Natural killer cell (primary cell): ENCODE measurements at regions of chr18 and their contacts with region 1.

Region 1: GRCh38 chr18:77067291-77068061 is 65.1 kb downstream of the MBP start:
- DNase-seq: peak; percentile 74 to 84
- ATAC-seq: peak; percentile 45 to 73 (median 64)
- H3K4me3 ChIP-seq: no peak overlapping the region
- H3K4me3 Mint-ChIP-seq: peak overlapping the region; percentile 83
- H3K27ac ChIP-seq: peak overlapping the region; percentile 93
- H3K27ac Mint-ChIP-seq: peak overlapping the region; percentile 94 to 98
- H3K4me1 ChIP-seq: peaks cover 96% of the 10 kb centered on the region
- H3K4me1 Mint-ChIP-seq: peaks cover 100% of the 10 kb centered on the region in 2 donors
- H3K27me3 ChIP-seq: no peaks in the 10 kb centered on the region
- H3K27me3 Mint-ChIP-seq: no peaks in the 10 kb centered on the region
- CTCF ChIP-seq: no peak

Region 2: DNA sequence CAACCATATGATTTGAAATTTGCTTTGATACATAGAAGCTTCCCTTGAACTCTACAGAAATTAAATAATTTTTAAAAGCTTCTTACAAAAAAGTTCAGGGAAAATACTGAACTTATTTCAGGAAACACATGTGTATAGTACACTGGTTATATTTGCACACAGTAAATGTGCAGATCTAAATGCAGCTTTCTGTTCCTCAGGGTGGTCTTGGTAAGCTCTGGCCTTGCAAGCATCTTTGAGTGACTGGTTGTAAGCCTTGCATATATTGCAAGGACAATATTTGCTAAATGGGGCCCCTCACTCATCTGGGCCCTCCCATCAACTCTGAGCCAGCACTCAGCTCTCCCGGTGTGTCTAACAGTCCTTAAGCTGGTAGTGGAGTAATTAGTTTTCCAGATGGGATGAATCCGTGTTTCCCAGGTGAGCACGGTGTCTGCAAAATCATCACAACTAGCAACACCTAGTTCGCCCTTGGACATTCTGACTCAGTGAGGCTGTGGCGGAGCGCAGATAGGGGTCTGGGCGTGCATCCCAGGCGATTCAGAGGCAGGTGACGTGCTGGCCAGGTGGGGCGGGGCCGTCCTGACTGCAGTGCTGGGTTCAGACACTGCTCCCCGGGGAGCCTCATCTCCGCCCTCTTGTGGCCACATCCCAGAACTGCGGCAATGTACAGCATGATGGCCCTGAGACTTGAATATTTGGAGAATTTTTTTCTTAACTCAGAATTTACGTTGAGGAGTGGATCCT is 84.5 kb before region 1 on chr18:
- intact Hi-C with region 1: no loop called
- DNase-seq: peak; percentile 77 to 88
- ATAC-seq: peak; percentile 88 to 100 (median 98)
- H3K4me3 ChIP-seq: no peak overlapping the region
- H3K4me3 Mint-ChIP-seq: no peak overlapping the region
- H3K27ac ChIP-seq: no peak overlapping the region
- H3K27ac Mint-ChIP-seq: no peak overlapping the region
- H3K4me1 ChIP-seq: peaks cover 5% of the 10 kb centered on the region
- H3K4me1 Mint-ChIP-seq: peaks cover 5 to 8% of the 10 kb centered on the region in 2 donors
- H3K27me3 ChIP-seq: no peaks in the 10 kb centered on the region
- H3K27me3 Mint-ChIP-seq: no peaks in the 10 kb centered on the region
- CTCF ChIP-seq: peak; percentile 94

Region 3: DNA sequence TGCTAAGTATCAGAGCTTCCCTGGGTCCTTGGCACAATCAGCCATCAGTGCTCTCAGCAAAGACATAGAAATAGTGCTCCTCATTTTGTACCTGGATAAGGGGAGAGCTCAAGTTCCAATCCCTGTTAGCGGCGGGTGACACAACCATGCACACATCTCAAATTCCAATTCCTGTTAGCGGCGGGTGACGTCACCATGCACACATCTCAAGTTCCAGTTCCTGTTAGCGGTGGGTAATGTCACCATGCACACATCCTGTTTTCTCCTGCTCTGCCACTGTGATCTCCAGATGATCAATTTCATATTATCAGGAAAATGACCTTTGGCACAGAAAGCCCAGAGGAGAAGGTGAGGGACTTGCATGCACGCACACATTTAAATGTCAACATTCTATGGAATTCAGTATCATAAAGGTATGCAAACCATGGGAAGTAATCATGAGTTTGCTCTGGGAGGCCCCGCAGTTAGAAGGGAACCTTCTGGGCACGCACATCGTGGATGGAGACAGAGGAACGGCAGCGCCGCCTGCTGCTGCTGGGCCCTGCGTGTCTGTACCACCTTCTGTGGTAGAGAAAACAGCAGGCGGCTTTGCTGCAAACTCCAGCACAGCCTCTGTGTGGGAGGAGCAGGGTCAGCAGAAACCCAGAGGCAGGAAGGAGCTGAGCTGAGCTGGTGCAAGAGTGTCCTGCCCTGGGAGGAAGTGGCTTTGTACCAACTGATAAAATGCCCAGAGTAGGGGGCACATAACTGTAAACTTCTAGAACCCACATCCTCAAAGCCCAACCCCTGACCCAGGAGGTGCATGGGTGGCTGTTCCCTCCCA is 12.7 kb before region 1 on chr18:
- intact Hi-C with region 1: loop called (anchors 1 kb)
- DNase-seq: peak; percentile 66 to 93
- ATAC-seq: peak; percentile 70 to 90 (median 84)
- H3K4me3 ChIP-seq: peak overlapping the region; percentile 3
- H3K4me3 Mint-ChIP-seq: peak overlapping the region; percentile 79
- H3K27ac ChIP-seq: peak overlapping the region; percentile 92
- H3K27ac Mint-ChIP-seq: peak overlapping the region; percentile 87 to 98
- H3K4me1 ChIP-seq: peaks cover 81% of the 10 kb centered on the region
- H3K4me1 Mint-ChIP-seq: peaks cover 73 to 77% of the 10 kb centered on the region in 2 donors
- H3K27me3 ChIP-seq: no peaks in the 10 kb centered on the region
- H3K27me3 Mint-ChIP-seq: no peaks in the 10 kb centered on the region
- CTCF ChIP-seq: peak; percentile 60

Region 4: GRCh38 chr18:77079954-77080682 is 12.6 kb after region 1 on chr18:
- intact Hi-C with region 1: loop called (anchors 1 kb)
- DNase-seq: peak; percentile 51 to 77
- ATAC-seq: peak; percentile 70 to 88 (median 88)
- H3K4me3 ChIP-seq: no peak overlapping the region
- H3K4me3 Mint-ChIP-seq: peak overlapping the region; percentile 57
- H3K27ac ChIP-seq: peak overlapping the region; percentile 69
- H3K27ac Mint-ChIP-seq: peak overlapping the region; percentile 94 to 98
- H3K4me1 ChIP-seq: peaks cover 79% of the 10 kb centered on the region
- H3K4me1 Mint-ChIP-seq: peaks cover 85 to 92% of the 10 kb centered on the region in 2 donors
- H3K27me3 ChIP-seq: no peaks in the 10 kb centered on the region
- H3K27me3 Mint-ChIP-seq: no peaks in the 10 kb centered on the region
- CTCF ChIP-seq: no peak

Region 5: GRCh38 chr18:77101410-77102258 is 34.2 kb after region 1 on chr18:
- intact Hi-C with region 1: loop called (anchors 1 kb)
- DNase-seq: peak; percentile 56 to 69
- ATAC-seq: peak; percentile 35 to 61 (median 42)
- H3K4me3 ChIP-seq: peak overlapping the region; percentile 1
- H3K4me3 Mint-ChIP-seq: peak overlapping the region; percentile 79
- H3K27ac ChIP-seq: peak overlapping the region; percentile 92
- H3K27ac Mint-ChIP-seq: peak overlapping the region; percentile 87 to 94
- H3K4me1 ChIP-seq: peaks cover 91% of the 10 kb centered on the region
- H3K4me1 Mint-ChIP-seq: peaks cover 92 to 98% of the 10 kb centered on the region in 2 donors
- H3K27me3 ChIP-seq: no peaks in the 10 kb centered on the region
- H3K27me3 Mint-ChIP-seq: no peaks in the 10 kb centered on the region
- CTCF ChIP-seq: no peak

Region 6: DNA sequence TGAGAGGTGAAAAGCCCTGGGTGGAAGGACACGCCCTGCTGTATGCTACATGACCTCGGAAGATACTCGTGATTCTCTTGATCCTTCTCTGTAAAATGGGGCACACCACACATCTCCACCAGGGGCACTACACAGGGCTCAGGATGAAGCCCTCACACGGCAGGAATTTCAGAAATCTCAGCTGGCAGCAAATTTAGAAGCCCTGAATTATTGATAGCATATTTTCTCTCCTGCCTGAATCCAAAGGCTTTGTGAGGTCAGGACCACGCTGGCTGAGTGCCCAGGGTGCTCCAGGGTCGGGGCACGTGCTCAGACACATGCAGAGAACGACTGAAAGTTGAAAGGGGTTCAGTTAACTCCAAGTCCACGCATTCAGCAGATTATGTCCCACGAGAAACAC is 140.1 kb after region 1 on chr18:
- intact Hi-C with region 1: loop called (anchors 10 kb)
- DNase-seq: peak in 1 of 2 donors; percentile 82
- ATAC-seq: peak; percentile 61 to 74 (median 74)
- H3K4me3 ChIP-seq: no peak overlapping the region
- H3K4me3 Mint-ChIP-seq: no peak overlapping the region
- H3K27ac ChIP-seq: no peak overlapping the region
- H3K27ac Mint-ChIP-seq: peak overlapping the region; percentile 47 to 96
- H3K4me1 ChIP-seq: peaks cover 41% of the 10 kb centered on the region
- H3K4me1 Mint-ChIP-seq: peaks cover 45 to 47% of the 10 kb centered on the region in 2 donors
- H3K27me3 ChIP-seq: no peaks in the 10 kb centered on the region
- H3K27me3 Mint-ChIP-seq: no peaks in the 10 kb centered on the region
- CTCF ChIP-seq: peak; percentile 49

Region 7: DNA sequence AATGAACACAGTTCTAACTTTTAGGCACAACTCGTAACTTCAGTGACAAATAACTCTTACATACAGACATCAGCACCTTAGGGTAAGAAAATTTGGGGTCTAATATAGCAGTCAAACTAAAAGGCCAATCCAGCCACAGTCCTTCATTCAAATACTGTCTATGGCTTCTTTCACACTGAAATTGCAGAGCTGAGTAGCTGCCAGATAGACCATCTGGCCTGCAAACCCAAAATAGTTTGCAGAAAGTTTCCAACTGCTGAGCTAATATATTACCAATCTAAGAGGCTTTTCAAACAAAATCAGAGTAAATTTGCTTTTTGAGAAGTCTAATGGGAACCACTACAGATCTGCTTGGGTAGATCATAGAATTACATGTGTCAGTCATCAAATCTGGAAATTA is 365.6 kb after region 1 on chr18:
- intact Hi-C with region 1: no loop called
- DNase-seq: no peak
- ATAC-seq: no peak
- H3K4me3 ChIP-seq: no peak overlapping the region
- H3K4me3 Mint-ChIP-seq: no peak overlapping the region
- H3K27ac ChIP-seq: no peak overlapping the region
- H3K27ac Mint-ChIP-seq: no peak overlapping the region
- H3K4me1 ChIP-seq: no peaks in the 10 kb centered on the region
- H3K4me1 Mint-ChIP-seq: peaks cover 0 to 7% of the 10 kb centered on the region in 2 donors
- H3K27me3 ChIP-seq: no peaks in the 10 kb centered on the region
- H3K27me3 Mint-ChIP-seq: peaks cover 23 to 27% of the 10 kb centered on the region in 2 donors
- CTCF ChIP-seq: no peak